Kidney (tissue), 22 donors: ENCODE measurements at regions of chr3 and their contacts with region 1.

Region 1: DNA sequence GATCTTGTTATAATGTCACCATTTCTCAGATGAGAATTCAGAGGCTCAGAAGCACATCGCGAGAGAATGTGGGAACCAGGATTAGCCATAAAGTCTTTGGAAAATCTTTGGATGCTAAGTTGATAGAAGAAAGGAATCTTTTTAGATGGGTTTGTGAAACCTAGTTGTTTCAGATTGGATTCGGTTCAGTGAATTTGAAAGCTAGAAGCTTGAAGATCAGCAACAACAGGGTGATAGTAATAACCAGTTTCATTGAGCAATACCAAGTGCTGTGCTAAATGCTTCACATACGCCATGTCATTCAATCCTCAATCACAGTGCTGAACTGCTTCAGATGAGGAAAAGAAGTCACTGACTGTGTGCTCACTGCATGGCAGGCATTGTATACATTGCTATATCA is 47.4 kb upstream of the MITF start:
- DNase-seq: no peak
- H3K4me3 ChIP-seq: no peak overlapping the region
- H3K27ac ChIP-seq: no peak overlapping the region
- H3K4me1 ChIP-seq: peaks cover 0 to 4% (median 0%) of the 10 kb centered on the region in 3 donors
- H3K27me3 ChIP-seq: no peaks in the 10 kb centered on the region
- CTCF ChIP-seq: no peak

Region 2: GRCh38 chr3:69568458-69568857 is 123.4 kb before region 1 on chr3:
- intact Hi-C with region 1: no loop called
- DNase-seq: no peak
- H3K4me3 ChIP-seq: no peak overlapping the region
- H3K27ac ChIP-seq: no peak overlapping the region
- H3K4me1 ChIP-seq: no peaks in the 10 kb centered on the region
- H3K27me3 ChIP-seq: no peaks in the 10 kb centered on the region
- CTCF ChIP-seq: no peak

Region 3: DNA sequence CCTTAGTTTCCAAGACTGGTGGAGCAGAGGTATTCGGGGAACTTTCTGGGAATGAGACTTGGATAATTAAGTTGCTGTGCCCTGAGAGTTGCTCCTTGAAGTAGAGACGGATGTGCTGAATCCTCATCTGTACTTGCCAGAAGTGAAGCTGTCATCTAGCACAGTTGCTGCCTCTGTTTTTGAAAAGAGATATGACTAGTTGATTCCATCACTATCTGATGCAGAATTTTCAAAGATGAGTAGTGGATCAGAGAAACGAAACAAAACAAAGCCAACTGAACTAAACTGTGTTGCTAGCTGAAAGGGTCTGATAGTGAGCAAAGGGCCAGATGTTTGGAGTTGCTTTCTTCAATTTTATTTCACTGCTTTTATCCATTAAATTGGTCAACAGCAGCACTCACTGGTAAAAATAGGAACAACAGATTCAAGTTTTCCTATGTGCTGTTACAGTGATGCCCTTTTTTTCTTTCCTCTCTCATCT is 100.1 kb after region 1 on chr3:
- intact Hi-C with region 1: loop called (anchors 10 kb)
- DNase-seq: peak in 2 of 5 donors; percentile 47 to 69
- H3K4me3 ChIP-seq: no peak overlapping the region
- H3K27ac ChIP-seq: no peak overlapping the region
- H3K4me1 ChIP-seq: peaks cover 0 to 19% (median 9%) of the 10 kb centered on the region in 3 donors
- H3K27me3 ChIP-seq: no peaks in the 10 kb centered on the region
- CTCF ChIP-seq: peak; percentile 60

Region 4: GRCh38 chr3:69855436-69856162 is 163.7 kb after region 1 on chr3:
- intact Hi-C with region 1: loop called (anchors 10 kb)
- DNase-seq: peak in 2 of 5 donors; percentile 10 to 41
- H3K4me3 ChIP-seq: no peak overlapping the region
- H3K27ac ChIP-seq: peak overlapping the region in 1 of 2 donors; percentile 7
- H3K4me1 ChIP-seq: peaks cover 0 to 8% (median 6%) of the 10 kb centered on the region in 3 donors
- H3K27me3 ChIP-seq: no peaks in the 10 kb centered on the region
- CTCF ChIP-seq: peak; percentile 48

Region 5: GRCh38 chr3:69948246-69948862 is 256.5 kb after region 1 on chr3:
- intact Hi-C with region 1: loop called (anchors 5 kb)
- DNase-seq: peak in 2 of 5 donors; percentile 60 to 83
- H3K4me3 ChIP-seq: no peak overlapping the region
- H3K27ac ChIP-seq: no peak overlapping the region
- H3K4me1 ChIP-seq: no peaks in the 10 kb centered on the region
- H3K27me3 ChIP-seq: no peaks in the 10 kb centered on the region
- CTCF ChIP-seq: peak; percentile 50